ENCODE measurements at regions of chr2 and their contacts with region 1.

Region 1: GRCh38 chr2:48356701-48357325 is 173.1 kb upstream of the STON1 start:
- DNase-seq: peak in 7 of 9 donors; percentile 53 to 77 (median 72)
- ATAC-seq: peak; percentile 88
- H3K4me3 ChIP-seq: peak overlapping the region; percentile 0
- H3K4me3 Mint-ChIP-seq: peak overlapping the region; percentile 5 to 84 (median 72)
- H3K27ac ChIP-seq: peak overlapping the region; percentile 72
- H3K27ac Mint-ChIP-seq: peak overlapping the region; percentile 84 to 97 (median 95)
- H3K4me1 ChIP-seq: peaks cover 15 to 50% of the 10 kb centered on the region in 2 donors
- H3K4me1 Mint-ChIP-seq: peaks cover 46 to 77% (median 67%) of the 10 kb centered on the region in 7 donors
- H3K27me3 ChIP-seq: no peaks in the 10 kb centered on the region
- H3K27me3 Mint-ChIP-seq: no peaks in the 10 kb centered on the region

Region 2: GRCh38 chr2:48369971-48370370 is 13.2 kb after region 1 on chr2:
- CTCF ChIA-PET with region 1: interaction called, 3 read pairs
- POLR2A ChIA-PET with region 1: no interaction called
- intact Hi-C with region 1: loop called in 1 of 2 experiments (anchors 2 kb)
- DNase-seq: no peak
- ATAC-seq: no peak
- H3K4me3 ChIP-seq: no peak overlapping the region
- H3K4me3 Mint-ChIP-seq: no peak overlapping the region
- H3K27ac ChIP-seq: no peak overlapping the region
- H3K27ac Mint-ChIP-seq: peak overlapping the region in 4 of 9 donors; percentile 4 to 82 (median 51)
- H3K4me1 ChIP-seq: no peaks in the 10 kb centered on the region
- H3K4me1 Mint-ChIP-seq: peaks cover 12 to 34% (median 29%) of the 10 kb centered on the region in 7 donors
- H3K27me3 ChIP-seq: no peaks in the 10 kb centered on the region
- H3K27me3 Mint-ChIP-seq: no peaks in the 10 kb centered on the region

Region 3: GRCh38 chr2:48377646-48378045 is 20.8 kb after region 1 on chr2:
- CTCF ChIA-PET with region 1: no interaction called
- POLR2A ChIA-PET with region 1: no interaction called
- intact Hi-C with region 1: loop called (anchors 2 kb)
- DNase-seq: no peak
- ATAC-seq: no peak
- H3K4me3 ChIP-seq: no peak overlapping the region
- H3K4me3 Mint-ChIP-seq: no peak overlapping the region
- H3K27ac ChIP-seq: no peak overlapping the region
- H3K27ac Mint-ChIP-seq: no peak overlapping the region
- H3K4me1 ChIP-seq: no peaks in the 10 kb centered on the region
- H3K4me1 Mint-ChIP-seq: peaks cover 0 to 6% (median 0%) of the 10 kb centered on the region in 7 donors
- H3K27me3 ChIP-seq: no peaks in the 10 kb centered on the region
- H3K27me3 Mint-ChIP-seq: no peaks in the 10 kb centered on the region

Region 4: GRCh38 chr2:48406116-48406515 is 49.3 kb after region 1 on chr2:
- CTCF ChIA-PET with region 1: no interaction called
- POLR2A ChIA-PET with region 1: no interaction called
- intact Hi-C with region 1: no loop called
- DNase-seq: no peak
- ATAC-seq: no peak
- H3K4me3 ChIP-seq: no peak overlapping the region
- H3K4me3 Mint-ChIP-seq: no peak overlapping the region
- H3K27ac ChIP-seq: no peak overlapping the region
- H3K27ac Mint-ChIP-seq: peak overlapping the region in 1 of 9 donors; percentile 50
- H3K4me1 ChIP-seq: no peaks in the 10 kb centered on the region
- H3K4me1 Mint-ChIP-seq: peaks cover 0 to 24% (median 2%) of the 10 kb centered on the region in 7 donors
- H3K27me3 ChIP-seq: no peaks in the 10 kb centered on the region
- H3K27me3 Mint-ChIP-seq: peaks cover 0 to 5% (median 0%) of the 10 kb centered on the region in 5 donors

Region 5: DNA sequence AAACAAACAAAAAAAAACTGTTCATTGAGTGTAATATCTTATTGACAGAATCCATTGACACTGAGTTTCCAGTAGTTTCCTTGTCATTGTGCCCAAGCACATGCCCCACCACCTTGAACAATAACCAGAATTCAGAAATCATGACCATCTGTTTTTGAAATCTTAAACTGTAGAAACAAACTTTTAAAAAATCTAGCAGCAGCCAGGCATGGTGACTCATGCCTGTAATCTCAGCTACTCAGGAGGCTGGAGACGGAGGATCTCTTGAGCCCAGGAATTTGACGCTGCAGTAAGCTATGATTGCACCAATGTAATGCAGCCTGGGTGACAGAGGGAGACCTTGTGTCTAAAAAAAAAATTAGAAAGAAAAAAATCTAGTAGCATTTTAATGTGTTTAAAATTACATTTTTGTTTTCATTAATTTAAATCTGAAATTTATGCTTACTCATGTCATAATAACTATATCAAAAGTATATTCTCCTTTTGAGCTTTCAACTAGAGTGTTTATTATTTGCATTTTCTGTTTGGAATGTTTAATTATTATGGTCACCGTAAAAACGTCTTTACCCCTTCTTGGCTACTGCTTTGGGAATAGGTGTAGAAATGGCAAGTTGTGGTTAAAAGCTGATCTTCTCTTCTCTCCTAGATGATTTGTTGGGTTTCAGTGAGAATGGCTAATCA is 148.0 kb after region 1 on chr2:
- CTCF ChIA-PET with region 1: no interaction called
- POLR2A ChIA-PET with region 1: no interaction called
- intact Hi-C with region 1: no loop called
- DNase-seq: no peak
- ATAC-seq: no peak
- H3K4me3 ChIP-seq: no peak overlapping the region
- H3K4me3 Mint-ChIP-seq: no peak overlapping the region
- H3K27ac ChIP-seq: no peak overlapping the region
- H3K27ac Mint-ChIP-seq: peak overlapping the region in 2 of 9 donors; percentile 5 to 28
- H3K4me1 ChIP-seq: peaks cover 0 to 9% of the 10 kb centered on the region in 2 donors
- H3K4me1 Mint-ChIP-seq: peaks cover 0 to 19% (median 16%) of the 10 kb centered on the region in 7 donors
- H3K27me3 ChIP-seq: no peaks in the 10 kb centered on the region
- H3K27me3 Mint-ChIP-seq: no peaks in the 10 kb centered on the region